Cardiac septum (tissue), 1 donor: ENCODE measurements at regions of chr11 and their contacts with region 1.

Region 1: DNA sequence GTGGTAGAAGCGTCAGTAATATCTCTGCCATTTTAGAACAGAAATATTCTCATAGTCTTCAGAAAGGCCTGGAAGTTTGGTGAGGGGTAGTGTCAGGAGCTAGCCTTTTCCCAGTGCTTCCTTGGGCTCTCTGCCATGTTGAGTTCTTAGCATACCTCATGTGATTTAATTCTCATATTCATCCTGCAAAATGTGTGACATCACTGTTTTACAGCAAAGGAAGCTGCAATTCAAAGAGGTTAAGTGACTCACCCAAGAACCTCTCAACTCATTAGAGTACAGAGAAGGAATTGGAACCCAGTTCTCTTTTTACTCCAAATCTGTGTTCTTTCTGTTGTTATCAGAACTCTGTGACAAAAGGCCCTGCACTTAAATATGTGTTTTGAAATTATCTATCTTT is 72.1 kb downstream of the RNF169 start:
- DNase-seq: no peak

Region 2: DNA sequence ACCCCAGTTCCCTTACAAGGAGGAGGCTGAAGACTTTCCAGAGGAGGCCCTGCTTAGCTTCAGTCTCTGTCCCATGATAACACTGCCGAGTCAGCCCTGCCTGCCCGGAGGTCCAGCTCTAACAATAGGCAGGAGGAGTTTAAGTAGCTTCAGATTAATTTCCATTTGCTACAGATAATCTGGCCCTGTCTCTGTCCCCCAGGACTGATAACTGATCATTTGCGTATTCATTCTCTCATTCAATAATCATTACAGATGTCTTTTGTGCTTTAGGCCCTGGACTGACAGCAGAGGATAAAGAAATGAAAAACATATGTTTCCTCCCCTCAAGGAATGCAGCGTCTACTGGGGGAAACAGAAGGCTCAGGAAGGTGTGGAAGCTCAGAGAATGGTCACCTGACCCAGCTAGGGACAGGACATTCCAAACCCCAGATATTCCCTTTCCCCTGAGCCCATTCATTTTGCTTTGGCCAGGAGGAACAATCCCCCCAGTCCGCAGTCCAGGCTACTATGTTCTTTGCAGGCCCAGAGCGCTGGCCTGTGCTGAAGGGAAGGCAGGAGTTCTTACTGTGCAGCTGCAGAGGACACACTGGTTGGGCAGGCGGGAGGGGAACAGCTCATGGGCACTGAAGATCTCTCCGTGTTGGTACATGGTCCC is 110.4 kb before region 1 on chr11:
- intact Hi-C with region 1: no loop called
- DNase-seq: no peak

Region 3: GRCh38 chr11:74769055-74769707 is 51.6 kb before region 1 on chr11:
- intact Hi-C with region 1: loop called (anchors 10 kb)
- DNase-seq: no peak